ENCODE measurements at regions of chr4 and their contacts with region 1.

Region 1: DNA sequence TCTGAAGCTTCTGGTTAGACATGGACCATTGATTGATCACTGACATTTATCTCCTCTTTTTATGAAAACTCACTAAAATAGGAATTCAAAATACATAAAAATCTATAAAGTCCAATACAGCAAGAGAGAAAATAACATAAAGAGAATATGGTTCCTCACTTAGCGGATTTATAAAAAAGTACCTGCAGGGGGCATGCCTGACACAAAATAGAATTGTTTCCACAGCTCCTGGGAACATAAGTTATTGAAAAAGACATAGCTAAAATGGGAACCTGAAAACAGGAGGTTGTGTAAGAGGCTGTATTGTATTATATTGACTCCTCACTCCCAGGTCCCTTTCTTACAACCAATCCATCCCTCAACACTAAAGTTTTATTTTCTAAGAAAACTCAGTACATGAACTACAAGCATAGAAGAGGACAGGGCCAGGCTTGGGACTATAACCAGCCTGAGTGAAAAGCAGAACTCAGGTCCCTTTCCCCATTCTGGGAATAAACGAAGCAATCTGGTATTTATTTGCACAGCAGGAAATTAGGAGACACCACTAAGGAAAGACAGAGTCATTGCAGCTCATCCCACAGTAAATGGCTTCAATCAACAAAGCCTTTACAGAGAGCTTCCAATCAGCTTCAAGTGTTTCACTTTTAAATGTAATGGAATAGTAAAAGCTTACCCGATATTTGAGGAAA is 121.1 kb upstream of the NDST4 start:
- DNase-seq: no peak
- H3K4me3 Mint-ChIP-seq: no peak overlapping the region
- H3K27ac Mint-ChIP-seq: no peak overlapping the region
- H3K4me1 Mint-ChIP-seq: no peaks in the 10 kb centered on the region
- H3K27me3 Mint-ChIP-seq: no peaks in the 10 kb centered on the region

Region 2: DNA sequence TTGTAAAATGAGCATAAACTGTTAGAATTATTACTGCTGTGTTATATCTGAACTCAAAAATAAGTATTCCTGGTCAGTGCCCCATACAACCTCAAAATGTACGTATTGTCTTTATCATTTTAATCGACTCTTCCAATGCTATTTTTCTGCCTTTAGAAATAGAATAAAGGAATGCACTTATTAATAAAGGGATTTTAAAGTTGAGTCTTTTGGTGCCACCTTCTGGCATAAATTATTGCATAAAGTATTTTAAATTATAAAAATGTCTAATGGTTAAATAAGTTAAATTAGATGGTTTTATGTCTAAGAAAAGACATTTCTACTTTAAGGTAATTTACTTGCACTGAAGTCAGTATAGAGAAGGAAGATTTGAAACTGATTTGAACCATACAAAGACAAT is 302.8 kb after region 1 on chr4:
- intact Hi-C with region 1: loop called (anchors 5 kb)
- DNase-seq: no peak
- H3K4me3 Mint-ChIP-seq: no peak overlapping the region
- H3K27ac Mint-ChIP-seq: no peak overlapping the region
- H3K4me1 Mint-ChIP-seq: no peaks in the 10 kb centered on the region
- H3K27me3 Mint-ChIP-seq: no peaks in the 10 kb centered on the region

Measured in activated T-helper 1 cell treated with anti-CD3 and anti-CD28 coated beads, Interleukin-12 subunit alpha, Interleukin-12 subunit beta, Interleukin-2, Interleukin-4 antibody, amounts not matched to agents 30 ng/mL and 10 ng/mL and 1 ng/mL, durations not matched to agents 14 hours and 24 hours and 36 hours (primary cell).